Vagina (tissue), 2 donors: ENCODE measurements at regions of chr17 and their contacts with region 1.

Region 1: GRCh38 chr17:48593840-48594537 is 410 bp upstream of the HOXB5 start:
- DNase-seq: no peak
- H3K4me3 ChIP-seq: peak overlapping the region in 1 of 2 donors; percentile 11
- H3K27ac ChIP-seq: no peak overlapping the region
- H3K4me1 ChIP-seq: peaks cover 34% of the 10 kb centered on the region
- H3K27me3 ChIP-seq: peaks cover 6% of the 10 kb centered on the region
- CTCF ChIP-seq: peak in 2 of 3 experiments; percentile 70 to 75
- POLR2A ChIP-seq: no peak

Region 2: GRCh38 chr17:48335858-48336500 is 258.0 kb before region 1 on chr17:
- intact Hi-C with region 1: loop called (anchors 5 kb)
- DNase-seq: no peak
- H3K4me3 ChIP-seq: no peak overlapping the region
- H3K27ac ChIP-seq: no peak overlapping the region
- H3K4me1 ChIP-seq: no peaks in the 10 kb centered on the region
- H3K27me3 ChIP-seq: no peaks in the 10 kb centered on the region
- CTCF ChIP-seq: peak; percentile 50 to 66 (median 59)
- POLR2A ChIP-seq: no peak

Region 3: DNA sequence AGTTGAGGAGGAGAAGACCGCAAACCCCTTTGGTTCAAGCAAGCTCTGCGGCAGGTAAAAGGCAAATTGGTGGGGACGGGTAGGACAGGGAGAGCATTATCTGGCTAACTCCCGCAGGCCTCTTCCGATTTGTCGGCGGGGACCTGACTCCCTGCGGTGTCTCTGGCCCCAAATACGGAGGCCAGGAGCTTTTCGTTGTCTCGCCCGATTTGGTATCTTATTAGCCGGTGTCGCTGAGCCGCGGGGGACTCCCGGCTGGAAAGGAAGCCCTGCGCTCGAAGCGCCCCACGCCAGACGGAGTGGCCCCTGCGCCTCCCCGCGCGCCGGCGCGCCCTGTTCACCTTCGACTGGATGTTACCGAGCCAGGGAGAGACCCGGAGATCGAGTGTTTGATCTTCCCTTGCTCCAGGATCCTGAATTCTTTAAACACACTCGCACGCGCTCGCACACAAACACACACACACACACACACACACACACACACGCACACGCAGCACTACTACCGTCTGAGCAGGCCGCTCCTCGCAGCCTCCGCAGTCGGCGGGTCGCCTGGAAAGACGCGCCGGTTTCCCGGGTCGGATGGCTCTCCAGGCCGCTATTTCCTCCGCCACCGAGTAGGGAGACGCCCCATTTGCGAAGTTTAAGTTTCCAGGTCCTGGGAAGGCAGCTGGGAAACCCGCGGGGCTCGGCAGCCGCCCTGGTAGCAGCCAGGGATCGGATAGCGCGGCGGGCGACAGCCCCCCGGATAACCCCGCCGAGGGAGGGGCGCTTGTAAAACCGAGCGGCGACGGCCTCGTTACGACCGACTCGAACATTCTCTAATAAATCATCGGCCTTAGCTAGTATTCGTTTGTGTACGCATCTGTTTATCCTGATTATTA is 125.0 kb after region 1 on chr17:
- intact Hi-C with region 1: no loop called
- DNase-seq: no peak
- H3K4me3 ChIP-seq: peak overlapping the region; percentile 34 to 46
- H3K27ac ChIP-seq: peak overlapping the region; percentile 70
- H3K4me1 ChIP-seq: peaks cover 31% of the 10 kb centered on the region
- H3K27me3 ChIP-seq: peaks cover 17% of the 10 kb centered on the region
- CTCF ChIP-seq: no peak
- POLR2A ChIP-seq: no peak